A549 (cell line): ENCODE measurements at regions of chr20 and their contacts with region 1.

Region 1: DNA sequence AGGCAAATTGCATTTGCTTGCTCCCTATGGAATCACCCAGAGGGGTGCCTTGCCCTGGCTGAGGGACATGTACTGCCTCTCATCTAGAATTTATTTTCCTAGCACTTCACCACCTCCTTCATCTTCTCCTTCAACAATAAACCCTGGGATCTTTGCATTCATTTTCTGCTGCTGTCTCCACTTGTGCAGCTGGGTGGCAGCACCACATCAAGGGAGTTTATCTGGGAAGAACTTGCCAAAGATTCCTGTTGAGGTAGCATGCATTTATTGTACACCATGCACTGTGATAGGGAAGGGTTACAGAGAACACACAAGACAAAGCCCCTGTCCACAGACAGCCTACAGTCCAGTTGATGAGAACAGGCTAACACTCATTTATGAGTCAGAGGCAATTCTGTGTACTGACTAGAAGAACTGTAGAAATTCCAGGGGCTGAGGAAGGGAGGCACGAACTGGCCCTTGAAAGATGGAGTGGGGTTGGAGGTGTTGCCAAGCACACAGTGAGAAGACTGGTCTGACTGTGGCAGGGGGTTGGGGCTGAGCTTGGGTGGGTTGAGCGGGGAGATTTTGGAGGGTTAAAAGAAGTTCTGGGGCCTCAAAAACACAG is 17.5 kb downstream of the C20orf173 start:
- DNase-seq: peak; percentile 34 to 58
- ATAC-seq: peak; percentile 41 to 57; a peak in 3 of 6 replicates
- H3K4me3 ChIP-seq: no peak overlapping the region
- H3K27ac ChIP-seq: no peak overlapping the region
- H3K4me1 ChIP-seq: peaks cover 11% of the 10 kb centered on the region; the same call in 2 of the 3 replicates
- CTCF ChIP-seq: peak; percentile 62
- EP300 ChIP-seq: no peak
- POLR2A ChIP-seq: no peak
- RAD21 ChIP-seq: peak; percentile 66 to 79

Region 2: GRCh38 chr20:35497780-35498189 is 14.1 kb before region 1 on chr20:
- CTCF ChIA-PET with region 1: interaction called, 10 read pairs
- POLR2A ChIA-PET with region 1: no interaction called
- DNase-seq: no peak
- ATAC-seq: no peak
- H3K4me3 ChIP-seq: no peak overlapping the region
- H3K27ac ChIP-seq: no peak overlapping the region
- H3K4me1 ChIP-seq: no peaks in the 10 kb centered on the region
- CTCF ChIP-seq: no peak
- EP300 ChIP-seq: no peak
- POLR2A ChIP-seq: no peak
- RAD21 ChIP-seq: no peak

Region 3: DNA sequence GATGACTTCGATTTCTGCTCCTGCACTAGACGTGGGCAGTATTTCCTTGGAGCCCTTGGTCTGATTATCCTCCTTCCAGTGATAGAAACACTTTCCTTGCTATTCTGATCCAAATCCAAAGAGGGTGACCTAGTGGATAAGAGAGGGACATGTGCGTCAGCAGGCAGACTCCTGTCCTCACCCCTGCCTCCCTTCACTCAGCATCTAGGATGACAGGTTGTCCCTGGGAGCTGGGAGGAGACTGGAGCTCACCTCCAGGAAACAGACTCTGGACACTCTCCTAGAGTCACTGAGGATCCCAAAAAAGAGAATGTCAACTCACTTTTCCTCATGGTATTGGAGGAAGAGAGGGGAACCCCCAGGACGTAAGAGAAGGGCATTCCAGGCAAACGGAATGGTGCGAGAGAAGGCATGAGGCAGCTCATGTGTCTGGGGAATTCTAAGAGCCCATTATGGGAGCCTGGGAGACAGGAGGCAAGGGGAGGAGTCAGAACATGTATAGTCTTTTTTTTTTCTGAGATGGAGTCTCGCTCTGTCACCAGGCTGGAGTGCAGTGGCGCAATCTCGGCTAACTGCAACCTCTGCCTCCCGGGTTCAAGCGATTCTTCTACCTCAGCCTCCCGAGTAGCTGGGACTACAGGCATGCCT is 15.3 kb after region 1 on chr20:
- CTCF ChIA-PET with region 1: interaction called, 10 read pairs
- POLR2A ChIA-PET with region 1: no interaction called
- DNase-seq: no peak
- ATAC-seq: no peak
- H3K4me3 ChIP-seq: no peak overlapping the region
- H3K27ac ChIP-seq: no peak overlapping the region
- H3K4me1 ChIP-seq: no peaks in the 10 kb centered on the region
- CTCF ChIP-seq: no peak
- EP300 ChIP-seq: no peak
- POLR2A ChIP-seq: no peak
- RAD21 ChIP-seq: no peak

Region 4: DNA sequence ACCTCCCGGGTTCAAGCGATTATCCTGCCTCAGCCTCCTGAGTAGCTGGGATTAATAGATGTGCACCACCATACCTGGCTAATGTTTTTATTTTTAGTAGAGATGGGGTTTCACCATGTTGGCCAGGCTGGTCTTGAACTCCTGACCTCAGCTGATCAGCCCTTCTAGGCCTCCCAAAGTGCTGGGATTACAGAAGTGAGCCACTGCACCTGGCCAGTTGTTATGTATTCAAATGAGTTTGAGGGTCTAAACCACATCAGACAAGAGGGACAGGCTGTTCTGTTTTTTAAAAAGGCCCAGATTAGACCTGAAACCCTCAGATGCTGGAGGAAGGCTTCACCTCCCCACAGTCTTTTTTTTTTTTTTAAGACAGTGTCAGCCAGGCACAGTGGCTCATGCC is 99.6 kb after region 1 on chr20:
- CTCF ChIA-PET with region 1: no interaction called
- POLR2A ChIA-PET with region 1: no interaction called
- DNase-seq: no peak
- ATAC-seq: no peak
- H3K4me3 ChIP-seq: no peak overlapping the region
- H3K27ac ChIP-seq: no peak overlapping the region
- H3K4me1 ChIP-seq: peaks cover 9% of the 10 kb centered on the region
- CTCF ChIP-seq: no peak
- EP300 ChIP-seq: no peak
- POLR2A ChIP-seq: no peak
- RAD21 ChIP-seq: no peak